Right cardiac atrium (tissue), 5 donors: ENCODE measurements at regions of chr11 and their contacts with region 1.

Region 1: GRCh38 chr11:117426269-117426685 is 98.6 kb downstream of the CEP164 start:
- DNase-seq: peak; percentile 58 to 85 (median 85)
- ATAC-seq: peak; percentile 58 to 69
- H3K4me3 ChIP-seq: no peak overlapping the region
- H3K27ac ChIP-seq: no peak overlapping the region
- H3K4me1 ChIP-seq: no peaks in the 10 kb centered on the region
- H3K27me3 ChIP-seq: no peaks in the 10 kb centered on the region

Region 2: GRCh38 chr11:117273550-117274289 is 152.6 kb before region 1 on chr11:
- intact Hi-C with region 1: no loop called
- DNase-seq: no peak
- ATAC-seq: no peak
- H3K4me3 ChIP-seq: no peak overlapping the region
- H3K27ac ChIP-seq: no peak overlapping the region
- H3K4me1 ChIP-seq: no peaks in the 10 kb centered on the region
- H3K27me3 ChIP-seq: no peaks in the 10 kb centered on the region

Region 3: DNA sequence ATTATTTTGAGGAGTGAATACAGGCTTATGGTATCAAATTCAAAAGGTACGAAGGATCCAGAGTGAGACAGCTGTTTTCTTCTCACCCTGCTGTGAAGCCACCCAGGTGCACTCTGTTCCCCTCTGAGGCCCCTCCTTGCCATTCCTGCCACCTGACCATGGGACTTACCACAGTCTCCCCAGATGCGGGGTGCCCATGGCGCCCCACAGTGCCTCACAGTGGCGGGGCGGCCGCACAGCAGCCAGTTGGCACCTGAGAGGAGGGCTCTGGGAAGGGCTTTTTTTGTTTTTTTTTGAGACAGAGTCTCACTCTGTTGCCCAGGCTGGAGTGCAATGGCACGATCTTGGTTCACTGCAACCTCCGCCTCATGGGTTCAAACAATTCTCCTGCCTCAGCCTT is 53.1 kb after region 1 on chr11:
- intact Hi-C with region 1: no loop called
- DNase-seq: no peak
- ATAC-seq: no peak
- H3K4me3 ChIP-seq: no peak overlapping the region
- H3K27ac ChIP-seq: no peak overlapping the region
- H3K4me1 ChIP-seq: no peaks in the 10 kb centered on the region
- H3K27me3 ChIP-seq: no peaks in the 10 kb centered on the region

Region 4: GRCh38 chr11:117610045-117610444 is 183.8 kb after region 1 on chr11:
- intact Hi-C with region 1: no loop called
- DNase-seq: no peak
- ATAC-seq: no peak
- H3K4me3 ChIP-seq: no peak overlapping the region
- H3K27ac ChIP-seq: no peak overlapping the region
- H3K4me1 ChIP-seq: no peaks in the 10 kb centered on the region
- H3K27me3 ChIP-seq: no peaks in the 10 kb centered on the region

Region 5: GRCh38 chr11:117817368-117818040 is 391.2 kb after region 1 on chr11:
- intact Hi-C with region 1: loop called in 3 of 4 experiments (anchors 5 kb)
- DNase-seq: peak; percentile 80 to 93 (median 93)
- ATAC-seq: peak; percentile 61 to 65
- H3K4me3 ChIP-seq: no peak overlapping the region
- H3K27ac ChIP-seq: peak overlapping the region; percentile 68
- H3K4me1 ChIP-seq: peaks cover 4% of the 10 kb centered on the region
- H3K27me3 ChIP-seq: no peaks in the 10 kb centered on the region